ENCODE measurements at regions of chr1 and their contacts with region 1.

Region 1: GRCh38 chr1:173202430-173203145 is 4.5 kb downstream of the TNFSF4 start:
- DNase-seq: no peak

Region 2: DNA sequence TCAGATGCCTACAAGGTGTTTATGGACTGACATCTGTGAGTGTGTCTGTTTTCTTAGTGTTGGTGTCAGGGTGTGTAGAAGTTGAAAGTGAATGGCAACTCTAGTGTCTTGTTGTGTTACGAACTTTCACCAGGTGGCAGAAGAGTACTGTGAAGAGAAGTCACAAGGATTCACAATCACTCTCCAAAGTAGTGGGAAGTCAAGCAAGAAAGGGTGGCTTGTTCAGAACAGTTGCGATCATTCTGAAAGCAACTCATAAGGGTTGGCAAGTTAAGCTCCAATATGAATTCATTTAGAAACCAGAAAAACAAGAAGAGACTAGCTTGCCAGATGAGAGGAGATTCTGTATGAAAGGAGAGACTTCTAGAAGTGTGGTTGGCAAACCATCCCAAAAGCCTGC is 457.6 kb before region 1 on chr1:
- intact Hi-C with region 1: loop called in 1 of 2 experiments (anchors 10 kb)
- DNase-seq: no peak

Region 3: GRCh38 chr1:172818841-172819527 is 383.6 kb before region 1 on chr1:
- intact Hi-C with region 1: loop called (anchors 5 kb)
- DNase-seq: no peak

Region 4: GRCh38 chr1:173420330-173420806 is 217.8 kb after region 1 on chr1:
- intact Hi-C with region 1: no loop called
- DNase-seq: peak; percentile 82